WTC11 (cell line): ENCODE measurements at regions of chr9 and their contacts with region 1.

Region 1: GRCh38 chr9:131349881-131350563 is 43.9 kb upstream of the PRRC2B start:
- DNase-seq: peak; percentile 96
- ATAC-seq: peak; percentile 93
- H3K4me3 Mint-ChIP-seq: peak overlapping the region; percentile 62
- H3K27ac Mint-ChIP-seq: peak overlapping the region; percentile 75; the same call in 1 of the 2 replicates
- H3K4me1 Mint-ChIP-seq: peaks cover 7% of the 10 kb centered on the region
- H3K27me3 Mint-ChIP-seq: peaks cover 4% of the 10 kb centered on the region
- CTCF ChIP-seq: peak; percentile 68

Region 2: DNA sequence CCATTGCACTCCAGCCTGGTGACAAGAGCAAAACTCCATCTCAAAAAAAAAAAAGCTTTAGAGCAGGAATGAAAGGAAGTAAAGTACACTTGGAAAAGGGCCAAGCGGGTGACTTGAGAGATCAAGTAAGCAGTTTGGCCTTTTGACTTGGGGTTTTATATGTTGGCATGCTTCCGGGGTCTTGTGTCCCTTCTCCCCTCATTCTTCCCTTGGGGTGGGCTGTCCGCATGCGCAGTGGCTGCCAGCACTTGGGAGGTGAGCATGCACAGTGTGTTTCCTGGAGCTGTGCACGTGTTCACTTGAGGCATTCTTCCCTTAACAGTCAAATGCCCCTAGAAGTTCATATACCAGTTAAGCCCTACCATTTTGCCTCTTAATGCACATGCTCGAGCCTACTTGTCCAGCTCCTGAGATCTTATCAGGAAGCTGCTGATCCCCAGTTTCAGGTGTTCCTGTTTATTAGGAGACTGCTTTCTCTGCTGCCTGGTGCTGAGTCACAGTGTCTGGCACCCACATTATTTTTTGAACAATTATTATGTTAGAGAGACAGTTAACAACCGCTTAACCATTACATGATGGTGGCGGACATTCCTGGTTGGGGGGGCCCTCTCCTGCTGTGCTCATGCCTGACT is 11.3 kb after region 1 on chr9:
- CTCF ChIA-PET with region 1: interaction called, 19 read pairs
- POLR2A ChIA-PET with region 1: no interaction called
- DNase-seq: peak; percentile 3
- ATAC-seq: no peak
- H3K4me3 Mint-ChIP-seq: no peak overlapping the region
- H3K27ac Mint-ChIP-seq: no peak overlapping the region
- H3K4me1 Mint-ChIP-seq: peaks cover 20% of the 10 kb centered on the region
- H3K27me3 Mint-ChIP-seq: no peaks in the 10 kb centered on the region
- CTCF ChIP-seq: no peak

Region 3: DNA sequence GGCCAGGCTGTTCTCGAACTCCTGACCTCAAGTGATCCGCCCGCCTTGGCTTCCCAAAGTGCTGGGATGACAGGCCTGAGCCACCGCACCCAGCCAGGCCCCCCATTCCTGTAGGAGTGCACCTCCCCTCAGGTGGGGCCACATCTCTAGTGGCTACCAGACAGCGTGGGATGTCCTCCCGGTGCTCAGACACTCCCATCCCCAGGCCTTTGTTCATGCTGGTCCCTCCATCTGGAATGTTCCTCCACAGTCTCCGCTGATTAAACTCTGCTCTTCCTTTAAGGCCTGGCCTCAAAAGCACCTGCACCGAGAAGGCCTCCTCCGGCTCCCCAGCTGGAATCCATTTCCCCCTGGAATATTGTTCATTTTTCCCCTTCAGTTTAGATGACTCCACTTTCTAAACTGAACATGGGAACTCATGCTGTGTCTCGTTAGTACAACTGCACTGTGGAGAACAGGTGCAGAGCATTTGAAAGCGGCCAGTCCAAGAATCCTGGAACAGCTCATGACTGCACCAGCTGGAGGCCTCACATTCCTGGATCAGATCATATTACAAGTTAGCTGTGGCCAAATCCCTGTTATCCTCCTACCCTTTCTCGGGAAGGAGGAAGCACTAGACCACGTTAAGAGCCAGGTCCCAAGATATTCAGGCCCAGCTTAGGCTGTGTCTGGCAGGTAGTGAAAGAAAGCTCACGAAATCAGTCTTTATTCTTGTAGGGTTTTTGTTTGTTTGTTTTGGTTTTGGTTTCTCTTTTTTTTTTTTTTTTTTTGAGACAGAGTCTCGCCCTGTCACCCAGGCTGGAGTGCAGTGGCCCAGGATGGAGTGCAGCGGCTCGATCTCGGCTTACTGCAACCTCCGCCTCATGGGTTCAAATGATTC is 33.1 kb after region 1 on chr9:
- CTCF ChIA-PET with region 1: interaction called, 15 read pairs
- POLR2A ChIA-PET with region 1: interaction called, 4 read pairs
- DNase-seq: peak; percentile 68
- ATAC-seq: peak; percentile 97
- H3K4me3 Mint-ChIP-seq: peak overlapping the region; percentile 18
- H3K27ac Mint-ChIP-seq: peak overlapping the region; percentile 97
- H3K4me1 Mint-ChIP-seq: peaks cover 29% of the 10 kb centered on the region
- H3K27me3 Mint-ChIP-seq: no peaks in the 10 kb centered on the region
- CTCF ChIP-seq: no peak

Region 4: DNA sequence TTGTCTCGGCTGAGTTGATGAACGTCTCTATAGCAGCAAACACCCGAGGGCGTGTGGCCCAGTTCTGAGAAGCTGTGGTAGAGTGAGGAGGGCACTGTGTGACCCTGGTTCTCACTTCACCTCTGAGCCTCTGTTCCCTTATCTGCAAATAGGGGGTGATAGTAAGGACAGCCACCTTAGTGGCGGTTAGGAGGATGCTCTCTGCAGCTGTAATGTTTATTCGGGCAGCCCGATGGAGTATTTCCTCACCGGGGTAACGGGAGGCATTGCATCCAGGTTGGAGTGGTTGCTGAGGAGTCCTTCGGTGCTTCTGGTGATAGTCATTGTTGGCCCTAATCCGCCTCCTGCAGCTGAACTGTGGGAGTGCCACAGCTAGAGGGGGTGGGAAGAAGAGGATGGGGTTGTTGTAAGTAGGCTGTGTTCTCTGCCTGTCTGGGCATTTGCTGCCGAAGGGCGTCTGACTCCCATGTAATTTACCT is 57.7 kb after region 1 on chr9:
- CTCF ChIA-PET with region 1: interaction called, 72 read pairs
- POLR2A ChIA-PET with region 1: interaction called, 3 read pairs
- DNase-seq: peak; percentile 67
- ATAC-seq: peak; percentile 68
- H3K4me3 Mint-ChIP-seq: peak overlapping the region; percentile 51
- H3K27ac Mint-ChIP-seq: peak overlapping the region; percentile 99
- H3K4me1 Mint-ChIP-seq: peaks cover 87% of the 10 kb centered on the region
- H3K27me3 Mint-ChIP-seq: no peaks in the 10 kb centered on the region
- CTCF ChIP-seq: no peak

Region 5: DNA sequence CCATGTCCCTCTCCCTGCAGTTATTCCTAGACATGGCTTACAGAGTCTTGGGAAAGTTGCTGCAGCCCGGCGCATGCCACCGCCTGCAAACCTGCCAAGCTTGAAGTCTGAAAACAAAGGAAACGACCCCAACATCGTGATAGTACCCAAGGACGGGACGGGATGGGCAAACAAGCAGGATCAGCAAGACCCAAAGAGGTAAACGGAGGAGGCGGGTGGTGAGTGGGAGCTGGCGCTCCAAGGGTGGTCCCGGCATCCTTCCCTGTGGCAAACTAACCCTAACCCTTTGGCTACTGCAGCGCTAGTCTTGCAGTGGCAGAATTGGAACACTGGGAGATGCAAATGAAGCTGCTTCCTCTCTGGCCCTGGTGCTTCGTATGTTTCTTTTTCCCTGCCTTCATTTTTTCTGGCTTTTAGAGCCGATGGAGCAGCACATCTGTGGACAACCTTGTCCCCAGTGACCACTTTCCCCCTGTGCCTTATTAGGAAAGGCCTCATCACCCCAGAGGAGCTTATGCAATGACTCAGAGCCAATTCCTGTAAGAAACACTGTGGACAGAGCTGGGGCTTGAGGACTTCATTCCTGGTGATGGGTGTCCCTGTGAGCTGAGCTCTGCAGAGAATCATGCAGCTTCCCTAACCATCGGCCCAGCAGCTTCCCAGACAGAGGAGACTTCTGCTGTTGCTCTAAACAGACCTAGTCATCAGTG is 82.7 kb after region 1 on chr9:
- CTCF ChIA-PET with region 1: interaction called, 20 read pairs
- POLR2A ChIA-PET with region 1: no interaction called
- DNase-seq: no peak
- ATAC-seq: no peak
- H3K4me3 Mint-ChIP-seq: no peak overlapping the region
- H3K27ac Mint-ChIP-seq: peak overlapping the region; percentile 97
- H3K4me1 Mint-ChIP-seq: peaks cover 71% of the 10 kb centered on the region
- H3K27me3 Mint-ChIP-seq: no peaks in the 10 kb centered on the region
- CTCF ChIP-seq: no peak